Right ventricle myocardium inferior (tissue), 1 donor: ENCODE measurements at regions of chr9 and their contacts with region 1.

Region 1: GRCh38 chr9:106830527-106831150 is 32.3 kb upstream of the ZNF462 start:
- DNase-seq: no peak
- ATAC-seq: peak; percentile 83

Region 2: DNA sequence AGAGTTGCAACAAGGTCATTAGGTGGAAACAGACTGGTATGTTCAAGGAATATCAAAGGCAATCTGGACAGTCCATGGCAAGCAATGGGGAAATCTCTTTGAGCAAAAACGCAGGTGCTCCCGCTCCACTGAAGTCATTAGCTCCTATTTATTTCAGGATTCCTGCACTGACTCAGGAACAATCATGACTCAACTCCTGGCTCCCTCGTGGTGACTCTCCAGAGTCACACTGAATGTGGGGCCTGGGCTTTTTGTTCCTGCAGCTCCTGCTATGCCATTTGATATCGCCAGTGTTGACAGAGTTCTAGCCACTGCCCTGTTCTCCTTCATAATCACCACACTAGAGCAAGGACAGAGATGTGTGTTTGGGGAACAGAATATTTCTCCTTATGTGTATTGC is 154.9 kb before region 1 on chr9:
- intact Hi-C with region 1: loop called (anchors 10 kb)
- DNase-seq: no peak
- ATAC-seq: peak; percentile 93

Region 3: GRCh38 chr9:107299437-107299836 is 468.8 kb after region 1 on chr9:
- intact Hi-C with region 1: no loop called
- DNase-seq: no peak
- ATAC-seq: no peak